PC-9 (cell line): ENCODE measurements at regions of chr2 and their contacts with region 1.

Region 1: DNA sequence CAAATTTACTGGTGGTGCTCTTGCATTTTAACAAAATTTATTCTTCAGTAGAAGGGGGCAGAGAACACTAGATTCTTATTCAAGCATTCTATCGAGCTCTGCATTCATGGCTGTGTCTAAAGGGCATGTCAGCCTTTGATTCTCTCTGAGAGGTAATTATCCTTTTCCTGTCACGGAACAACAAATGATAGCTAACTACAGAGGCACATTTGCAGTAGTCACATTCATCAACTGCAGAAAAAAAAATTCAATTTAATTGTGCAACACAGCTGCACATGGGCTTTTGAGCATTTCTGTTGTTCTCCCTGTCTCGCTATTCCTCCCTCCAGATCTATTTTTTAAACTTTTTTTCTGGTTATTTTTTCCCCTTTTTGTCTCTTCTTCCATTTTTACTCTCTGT is 13.0 kb upstream of the DLX1 start:
- DNase-seq: no peak
- H3K4me3 ChIP-seq: no peak overlapping the region
- H3K27ac ChIP-seq: no peak overlapping the region
- H3K4me1 ChIP-seq: peaks cover 4% of the 10 kb centered on the region; the same call in 1 of the 2 replicates
- H3K27me3 ChIP-seq: no peaks in the 10 kb centered on the region
- CTCF ChIP-seq: no peak

Region 2: DNA sequence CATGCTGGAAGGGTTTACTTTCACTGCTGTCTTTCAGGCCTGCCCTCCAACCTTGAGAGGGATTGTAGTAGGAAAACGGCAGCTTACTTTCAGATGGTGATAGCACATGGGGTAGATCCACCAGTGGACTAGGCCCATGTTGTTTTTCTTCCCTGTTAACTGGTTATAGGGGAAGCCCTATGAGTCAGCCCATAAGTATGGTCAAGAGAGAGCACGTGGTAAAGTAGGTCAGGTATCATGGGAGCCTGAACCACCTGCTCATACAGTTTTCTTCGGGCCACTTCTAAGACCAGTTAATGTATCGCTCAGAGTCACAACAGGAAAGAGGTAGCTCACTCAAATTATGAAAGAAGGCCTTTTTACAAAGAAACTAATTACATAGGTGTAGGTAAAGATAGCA is 516.6 kb after region 1 on chr2:
- CTCF ChIA-PET with region 1: interaction called, 16 read pairs
- POLR2A ChIA-PET with region 1: no interaction called
- intact Hi-C with region 1: no loop called
- DNase-seq: peak in 1 of 2 experiments; percentile 73
- H3K4me3 ChIP-seq: no peak overlapping the region
- H3K27ac ChIP-seq: 0 out of 2 replicates have a peak overlapping the region, but pooled peaks have one; percentile 1
- H3K4me1 ChIP-seq: peaks cover 13% of the 10 kb centered on the region
- H3K27me3 ChIP-seq: no peaks in the 10 kb centered on the region
- CTCF ChIP-seq: no peak

Region 3: GRCh38 chr2:173002751-173003541 is 930.6 kb after region 1 on chr2:
- CTCF ChIA-PET with region 1: no interaction called
- POLR2A ChIA-PET with region 1: no interaction called
- intact Hi-C with region 1: no loop called
- DNase-seq: no peak
- H3K4me3 ChIP-seq: no peak overlapping the region
- H3K27ac ChIP-seq: no peak overlapping the region
- H3K4me1 ChIP-seq: peaks cover 49% of the 10 kb centered on the region
- H3K27me3 ChIP-seq: no peaks in the 10 kb centered on the region
- CTCF ChIP-seq: no peak

Region 4: DNA sequence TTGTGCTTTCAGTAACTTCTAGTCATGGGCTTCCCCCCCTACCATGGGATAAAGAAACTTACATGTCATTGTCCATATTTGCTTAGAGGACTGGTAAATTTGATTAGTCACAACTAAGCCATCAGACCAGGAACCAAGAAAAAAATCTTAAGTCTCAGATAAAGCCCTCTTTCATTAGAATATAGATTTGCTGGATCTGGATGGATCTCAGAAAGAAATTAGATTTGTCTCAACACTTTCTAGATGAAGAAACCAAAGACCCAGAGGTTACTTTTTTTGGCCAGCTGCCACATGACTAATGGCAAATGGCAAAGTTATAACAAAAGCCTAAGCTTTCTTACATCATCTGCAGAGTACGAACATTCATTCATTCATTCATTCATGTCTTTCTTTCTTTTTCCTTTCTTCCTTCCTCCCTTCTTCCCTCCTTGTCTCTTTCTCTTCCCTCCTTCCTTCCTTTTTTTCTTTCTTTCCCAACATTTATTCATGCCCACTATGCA is 1342.6 kb after region 1 on chr2:
- CTCF ChIA-PET with region 1: no interaction called
- POLR2A ChIA-PET with region 1: no interaction called
- intact Hi-C with region 1: no loop called
- DNase-seq: peak; percentile 34 to 62
- H3K4me3 ChIP-seq: no peak overlapping the region
- H3K27ac ChIP-seq: no peak overlapping the region
- H3K4me1 ChIP-seq: peaks cover 19% of the 10 kb centered on the region
- H3K27me3 ChIP-seq: no peaks in the 10 kb centered on the region
- CTCF ChIP-seq: no peak